ENCODE measurements at regions of chr2 and their contacts with region 1.

Region 1: GRCh38 chr2:37389989-37390765 is 45.7 kb downstream of the QPCT start:
- H3K4me3 Mint-ChIP-seq: no peak overlapping the region
- H3K27ac Mint-ChIP-seq: no peak overlapping the region
- H3K4me1 Mint-ChIP-seq: no peaks in the 10 kb centered on the region
- H3K27me3 Mint-ChIP-seq: no peaks in the 10 kb centered on the region

Region 2: DNA sequence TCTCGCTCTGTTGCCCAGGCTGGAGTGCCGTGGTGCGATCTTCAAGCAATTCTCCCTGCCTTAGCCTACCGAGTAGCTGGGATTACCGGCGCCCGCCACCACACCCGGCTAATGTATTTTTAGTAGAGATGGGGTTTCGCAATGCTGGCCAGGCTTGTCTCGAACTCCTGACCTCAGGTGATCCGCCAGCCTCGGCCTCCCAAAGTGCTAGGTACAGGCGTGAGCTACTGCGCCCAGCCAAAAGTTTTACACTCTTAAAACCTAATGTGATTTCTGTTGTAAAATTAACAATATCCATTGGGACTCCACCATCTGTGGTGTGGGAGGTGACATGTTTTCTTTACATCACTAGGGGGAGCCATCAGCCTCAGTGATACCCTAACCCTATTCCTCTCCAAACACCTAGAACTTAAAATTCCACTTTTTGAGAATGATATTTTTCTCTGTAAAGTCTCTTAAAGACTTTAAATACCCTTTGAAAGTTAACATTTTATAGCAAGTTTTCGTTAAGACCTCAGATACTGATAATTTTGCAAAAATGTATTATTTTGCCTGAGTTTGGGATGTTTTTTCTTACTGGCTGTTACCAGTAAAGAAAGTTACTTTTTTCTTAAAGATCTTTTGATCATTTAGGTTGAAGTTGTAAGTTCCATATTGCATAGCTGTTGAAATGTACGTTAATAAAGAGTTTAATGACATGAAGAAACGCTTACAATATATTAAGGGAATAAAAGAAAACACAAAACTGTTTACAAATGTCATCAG is 221.8 kb before region 1 on chr2:
- intact Hi-C with region 1: no loop called
- H3K4me3 Mint-ChIP-seq: no peak overlapping the region
- H3K27ac Mint-ChIP-seq: no peak overlapping the region
- H3K4me1 Mint-ChIP-seq: peaks cover 4% of the 10 kb centered on the region
- H3K27me3 Mint-ChIP-seq: no peaks in the 10 kb centered on the region

Region 3: GRCh38 chr2:37324786-37325624 is 65.2 kb before region 1 on chr2 and contains the start of gene PRKD3:
- intact Hi-C with region 1: loop called (anchors 5 kb)
- H3K4me3 Mint-ChIP-seq: peak within 1 kb of the TSS; percentile 91
- H3K27ac Mint-ChIP-seq: peak within 1 kb of the TSS; percentile 78
- H3K4me1 Mint-ChIP-seq: peaks cover 31% of the 10 kb centered on the region
- H3K27me3 Mint-ChIP-seq: no peaks in the 10 kb centered on the region

Region 4: DNA sequence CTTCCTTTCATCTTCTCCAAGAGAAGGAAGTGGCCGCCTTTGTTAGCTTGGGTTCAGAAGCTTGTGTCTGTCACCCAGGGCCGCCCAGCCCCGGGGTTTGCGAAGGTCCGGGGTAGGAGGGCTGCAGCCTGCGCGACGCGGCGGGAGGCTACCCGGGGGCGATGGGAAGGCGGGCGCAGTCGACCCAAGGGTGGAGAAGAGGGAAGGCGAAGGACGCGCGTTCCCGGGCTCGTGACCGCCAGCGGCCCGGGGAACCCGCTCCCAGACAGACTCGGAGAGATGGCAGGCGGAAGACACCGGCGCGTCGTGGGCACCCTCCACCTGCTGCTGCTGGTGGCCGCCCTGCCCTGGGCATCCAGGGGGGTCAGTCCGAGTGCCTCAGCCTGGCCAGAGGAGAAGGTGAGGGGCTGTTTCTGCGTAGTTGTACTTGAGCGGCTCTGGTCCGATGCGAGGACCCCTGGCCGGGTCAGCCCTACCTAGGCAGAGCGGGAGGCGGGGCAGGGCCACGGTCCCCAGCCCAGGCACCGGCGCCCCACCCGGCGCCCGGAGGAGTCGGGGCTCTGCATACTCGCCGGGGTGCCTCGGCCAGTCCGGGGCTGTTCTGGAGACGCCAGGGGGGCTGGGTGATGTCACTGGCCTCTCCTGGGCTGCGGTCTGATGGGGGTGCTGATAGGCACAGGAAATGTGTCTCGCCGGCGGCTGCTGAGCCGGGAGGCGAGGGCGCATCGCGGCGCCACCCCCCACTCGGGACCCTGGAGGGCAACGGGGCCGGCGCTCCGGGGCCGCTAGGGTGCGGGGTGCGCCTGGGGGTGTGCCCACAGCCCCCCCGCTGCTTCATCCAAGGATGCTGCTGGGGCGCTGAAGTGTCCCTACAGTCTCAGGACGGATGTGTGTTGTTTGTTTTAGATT is 45.5 kb before region 1 on chr2 and contains the start of gene QPCT:
- intact Hi-C with region 1: loop called (anchors 2 kb)
- H3K4me3 Mint-ChIP-seq: peak within 1 kb of the TSS; percentile 86
- H3K27ac Mint-ChIP-seq: peak within 1 kb of the TSS; percentile 88
- H3K4me1 Mint-ChIP-seq: peaks cover 64% of the 10 kb centered on the region
- H3K27me3 Mint-ChIP-seq: no peaks in the 10 kb centered on the region

Region 5: GRCh38 chr2:37809525-37809924 is 419.3 kb after region 1 on chr2:
- intact Hi-C with region 1: loop called (anchors 5 kb)
- H3K4me3 Mint-ChIP-seq: no peak overlapping the region
- H3K27ac Mint-ChIP-seq: no peak overlapping the region
- H3K4me1 Mint-ChIP-seq: peaks cover 20% of the 10 kb centered on the region
- H3K27me3 Mint-ChIP-seq: no peaks in the 10 kb centered on the region